ENCODE measurements at regions of chr15 and their contacts with region 1.

Region 1: GRCh38 chr15:73908030-73908821 is 18.0 kb upstream of the LOXL1 start:
- DNase-seq: peak; percentile 53 to 81 (median 74)
- ATAC-seq: peak; percentile 89
- H3K4me3 ChIP-seq: no peak overlapping the region
- H3K4me3 Mint-ChIP-seq: no peak overlapping the region
- H3K27ac ChIP-seq: no peak overlapping the region
- H3K27ac Mint-ChIP-seq: no peak overlapping the region
- H3K4me1 ChIP-seq: no peaks in the 10 kb centered on the region
- H3K4me1 Mint-ChIP-seq: no peaks in the 10 kb centered on the region
- H3K27me3 ChIP-seq: no peaks in the 10 kb centered on the region
- H3K27me3 Mint-ChIP-seq: no peaks in the 10 kb centered on the region
- CTCF ChIP-seq: peak; percentile 79

Region 2: DNA sequence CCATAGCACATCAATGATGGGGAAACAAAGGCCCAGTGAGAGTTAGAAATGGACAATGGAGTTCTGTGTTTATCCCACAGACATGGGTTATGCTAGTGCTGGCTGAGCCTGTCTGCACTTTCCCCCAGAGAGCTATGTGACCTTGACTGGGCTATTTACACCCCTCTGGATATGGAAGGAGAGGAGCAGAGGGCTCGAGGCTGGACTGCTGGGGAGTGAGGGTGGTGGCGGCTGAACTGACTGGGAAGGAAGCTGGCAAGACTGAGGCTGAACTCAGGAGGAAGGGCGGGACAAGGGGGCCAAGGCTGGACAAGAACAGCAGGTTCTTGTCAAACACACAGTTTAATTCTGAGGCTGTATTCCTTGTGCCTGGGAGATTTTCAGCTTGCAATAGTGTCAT is 144.3 kb before region 1 on chr15:
- CTCF ChIA-PET with region 1: no interaction called
- POLR2A ChIA-PET with region 1: no interaction called
- intact Hi-C with region 1: no loop called
- DNase-seq: no peak
- ATAC-seq: no peak
- H3K4me3 ChIP-seq: no peak overlapping the region
- H3K4me3 Mint-ChIP-seq: no peak overlapping the region
- H3K27ac ChIP-seq: no peak overlapping the region
- H3K27ac Mint-ChIP-seq: no peak overlapping the region
- H3K4me1 ChIP-seq: no peaks in the 10 kb centered on the region
- H3K4me1 Mint-ChIP-seq: no peaks in the 10 kb centered on the region
- H3K27me3 ChIP-seq: peaks cover 0 to 6% of the 10 kb centered on the region in 2 experiments
- H3K27me3 Mint-ChIP-seq: peaks cover 15% of the 10 kb centered on the region
- CTCF ChIP-seq: no peak

Region 3: GRCh38 chr15:73891328-73892315 is 16.6 kb before region 1 on chr15:
- CTCF ChIA-PET with region 1: interaction called, 26 read pairs
- POLR2A ChIA-PET with region 1: no interaction called
- intact Hi-C with region 1: no loop called
- DNase-seq: no peak
- ATAC-seq: no peak
- H3K4me3 ChIP-seq: no peak overlapping the region
- H3K4me3 Mint-ChIP-seq: no peak overlapping the region
- H3K27ac ChIP-seq: no peak overlapping the region
- H3K27ac Mint-ChIP-seq: no peak overlapping the region
- H3K4me1 ChIP-seq: no peaks in the 10 kb centered on the region
- H3K4me1 Mint-ChIP-seq: no peaks in the 10 kb centered on the region
- H3K27me3 ChIP-seq: no peaks in the 10 kb centered on the region
- H3K27me3 Mint-ChIP-seq: peaks cover 9% of the 10 kb centered on the region
- CTCF ChIP-seq: no peak

Region 4: DNA sequence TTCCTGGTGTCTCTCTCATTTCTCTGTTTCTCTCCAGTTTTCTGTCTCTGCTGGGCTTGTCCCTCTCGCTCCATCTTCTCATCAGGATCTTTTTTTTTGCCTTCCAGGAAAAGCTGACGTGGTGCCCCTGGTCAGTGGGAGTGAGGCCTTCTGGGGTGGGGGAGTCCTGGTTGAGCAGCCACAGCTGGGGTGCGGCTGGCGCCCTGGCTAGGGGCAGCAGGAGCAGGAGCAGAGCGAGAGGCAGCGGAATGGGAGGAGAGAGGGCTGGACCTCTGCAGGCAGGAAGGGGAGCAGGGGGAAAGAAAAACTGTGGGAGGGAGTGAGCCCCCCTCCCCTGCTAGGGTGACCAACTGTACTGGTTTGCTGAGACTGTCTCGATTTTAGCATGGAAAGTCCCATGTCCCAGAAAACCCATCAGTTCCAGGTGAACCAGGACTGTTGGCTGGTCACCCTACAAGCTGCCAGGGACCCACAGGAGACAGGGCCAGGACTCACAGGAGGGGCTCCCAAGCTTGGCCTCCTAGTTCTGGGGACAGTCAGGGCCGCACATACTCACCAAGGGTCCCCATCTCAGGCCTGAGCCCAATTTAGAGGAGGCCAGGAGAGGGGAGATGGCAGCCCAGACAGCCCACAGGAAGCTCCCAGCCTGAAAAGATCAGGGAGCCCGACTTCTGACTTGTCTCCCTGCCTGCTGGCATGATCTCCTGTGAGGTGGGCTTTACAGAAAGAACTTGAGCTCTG is 262.4 kb after region 1 on chr15:
- CTCF ChIA-PET with region 1: no interaction called
- POLR2A ChIA-PET with region 1: no interaction called
- intact Hi-C with region 1: no loop called
- DNase-seq: no peak
- ATAC-seq: no peak
- H3K4me3 ChIP-seq: no peak overlapping the region
- H3K4me3 Mint-ChIP-seq: no peak overlapping the region
- H3K27ac ChIP-seq: no peak overlapping the region
- H3K27ac Mint-ChIP-seq: no peak overlapping the region
- H3K4me1 ChIP-seq: no peaks in the 10 kb centered on the region
- H3K4me1 Mint-ChIP-seq: no peaks in the 10 kb centered on the region
- H3K27me3 ChIP-seq: no peaks in the 10 kb centered on the region
- H3K27me3 Mint-ChIP-seq: peaks cover 3% of the 10 kb centered on the region
- CTCF ChIP-seq: no peak